ENCODE measurements at regions of chr4 and their contacts with region 1.

Region 1: GRCh38 chr4:184745831-184746795 is 12.2 kb upstream of the CENPU start:
- DNase-seq: peak; percentile 62
- ATAC-seq: peak; percentile 37
- H3K4me3 ChIP-seq: no peak overlapping the region; a peak in 1 of 6 replicates
- H3K27ac ChIP-seq: no peak overlapping the region
- H3K4me1 ChIP-seq: peaks cover 53% of the 10 kb centered on the region
- H3K27me3 ChIP-seq: no peaks in the 10 kb centered on the region
- CTCF ChIP-seq: peak; percentile 79
- EP300 ChIP-seq: no peak
- POLR2A ChIP-seq: no peak
- RAD21 ChIP-seq: peak; percentile 75

Region 2: GRCh38 chr4:184156163-184156920 is 589.8 kb before region 1 on chr4:
- CTCF ChIA-PET with region 1: no interaction called
- POLR2A ChIA-PET with region 1: no interaction called
- in situ Hi-C with region 1: no loop called
- intact Hi-C with region 1: no loop called
- DNase-seq: no peak
- ATAC-seq: no peak
- H3K4me3 ChIP-seq: no peak overlapping the region
- H3K27ac ChIP-seq: no peak overlapping the region
- H3K4me1 ChIP-seq: no peaks in the 10 kb centered on the region
- H3K27me3 ChIP-seq: no peaks in the 10 kb centered on the region
- CTCF ChIP-seq: no peak
- EP300 ChIP-seq: no peak
- POLR2A ChIP-seq: no peak
- RAD21 ChIP-seq: no peak

Region 3: DNA sequence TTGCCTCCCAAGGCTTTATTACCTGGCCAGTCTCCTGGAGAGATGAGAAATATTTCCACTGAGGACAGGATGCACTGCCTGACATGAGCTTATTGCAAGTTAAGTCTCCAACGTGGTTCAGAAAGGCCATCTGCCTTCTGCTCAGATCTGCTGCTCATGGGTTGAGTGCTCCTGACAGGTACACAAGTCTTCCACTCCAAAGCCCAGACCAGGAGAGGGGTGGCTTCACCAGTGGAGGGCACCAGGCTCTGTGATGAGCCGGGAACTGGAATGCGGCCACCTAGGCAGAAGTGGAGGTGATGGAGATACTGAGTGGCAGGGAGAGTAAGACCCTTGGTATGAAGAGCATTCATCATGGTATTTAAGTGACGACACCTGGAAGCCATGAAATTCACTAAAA is 192.2 kb before region 1 on chr4:
- CTCF ChIA-PET with region 1: no interaction called
- POLR2A ChIA-PET with region 1: no interaction called
- in situ Hi-C with region 1: no loop called
- intact Hi-C with region 1: loop called (anchors 10 kb)
- DNase-seq: peak; percentile 35
- ATAC-seq: peak; percentile 55
- H3K4me3 ChIP-seq: no peak overlapping the region
- H3K27ac ChIP-seq: no peak overlapping the region
- H3K4me1 ChIP-seq: peaks cover 22% of the 10 kb centered on the region
- H3K27me3 ChIP-seq: no peaks in the 10 kb centered on the region
- CTCF ChIP-seq: peak; percentile 63
- EP300 ChIP-seq: no peak
- POLR2A ChIP-seq: no peak
- RAD21 ChIP-seq: no peak

Region 4: DNA sequence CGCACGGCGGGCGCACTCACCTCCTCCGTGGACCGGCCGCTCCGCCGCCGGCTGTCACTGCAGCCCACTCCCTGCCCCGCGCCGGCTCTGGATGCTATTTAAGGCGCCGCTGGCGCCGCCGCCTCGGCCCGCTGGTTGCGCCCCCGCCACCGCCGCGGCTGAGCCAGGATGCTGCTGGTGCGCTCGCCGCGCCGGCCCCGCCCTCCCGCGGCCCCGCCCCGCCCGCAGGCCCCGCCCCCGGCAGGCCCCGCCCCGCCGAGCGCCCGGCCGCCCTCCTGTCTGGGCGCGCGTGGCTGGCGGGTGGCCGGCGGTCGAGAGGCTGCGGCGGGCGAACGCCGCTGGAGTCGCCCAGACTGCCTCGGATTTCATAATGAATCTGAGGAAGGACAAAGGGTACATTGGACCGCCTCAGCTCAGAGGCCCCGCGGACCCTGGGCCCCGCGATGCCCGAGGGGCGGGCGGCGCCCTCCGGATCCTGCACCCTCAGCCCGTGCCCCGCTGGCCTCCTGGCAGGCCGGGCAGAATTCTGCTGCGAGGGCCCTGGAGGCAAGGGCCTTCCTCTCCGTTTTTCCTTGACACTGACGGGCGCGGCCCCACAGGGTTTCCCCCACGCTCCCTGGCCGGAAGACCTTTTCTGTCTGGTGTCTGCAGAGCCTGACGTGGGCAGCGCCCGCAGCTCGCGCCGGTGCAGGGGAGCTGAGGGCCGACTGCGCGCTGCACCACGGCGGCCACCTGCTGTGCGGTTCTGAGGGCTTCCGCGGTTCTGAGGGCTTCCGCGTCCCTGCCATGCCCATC is 80.0 kb after region 1 on chr4 and contains the start of gene ACSL1:
- CTCF ChIA-PET with region 1: no interaction called
- POLR2A ChIA-PET with region 1: no interaction called
- in situ Hi-C with region 1: loop called (anchors 10 kb)
- intact Hi-C with region 1: no loop called
- DNase-seq: peak; percentile 39
- ATAC-seq: peak; percentile 85
- H3K4me3 ChIP-seq: peak within 1 kb of the TSS; percentile 58 to 81 (median 75)
- H3K27ac ChIP-seq: no peak within 1 kb of the TSS
- H3K4me1 ChIP-seq: peaks cover 40% of the 10 kb centered on the region
- H3K27me3 ChIP-seq: peaks cover 0 to 3% of the 10 kb centered on the region in 2 experiments; a peak in 1 of 5 replicates
- CTCF ChIP-seq: no peak
- EP300 ChIP-seq: no peak
- POLR2A ChIP-seq: peak in 1 of 2 experiments; percentile 54; a peak in 2 of 4 replicates
- RAD21 ChIP-seq: 0 out of 2 replicates have a peak, but pooled peaks have one; percentile 5
- total RNA-seq, gene ACSL1: 29.8 and 38.2 TPM in 2 replicates

Region 5: GRCh38 chr4:184983672-184984356 is 237.7 kb after region 1 on chr4:
- CTCF ChIA-PET with region 1: interaction called, 18 read pairs
- POLR2A ChIA-PET with region 1: no interaction called
- in situ Hi-C with region 1: loop called (anchors 5 kb)
- intact Hi-C with region 1: loop called (anchors 1 kb)
- DNase-seq: peak; percentile 42
- ATAC-seq: peak; percentile 91
- H3K4me3 ChIP-seq: no peak overlapping the region
- H3K27ac ChIP-seq: no peak overlapping the region
- H3K4me1 ChIP-seq: no peaks in the 10 kb centered on the region
- H3K27me3 ChIP-seq: peaks cover 4 to 15% of the 10 kb centered on the region in 2 experiments; a peak in 2 of 5 replicates
- CTCF ChIP-seq: peak; percentile 78
- EP300 ChIP-seq: no peak
- POLR2A ChIP-seq: no peak
- RAD21 ChIP-seq: peak; percentile 62

Region 6: GRCh38 chr4:185011408-185011807 is 265.3 kb after region 1 on chr4:
- CTCF ChIA-PET with region 1: interaction called, 7 read pairs
- POLR2A ChIA-PET with region 1: interaction called, 3 read pairs
- in situ Hi-C with region 1: no loop called
- intact Hi-C with region 1: loop called (anchors 2 kb)
- DNase-seq: peak; percentile 14
- ATAC-seq: peak; percentile 97
- H3K4me3 ChIP-seq: no peak overlapping the region
- H3K27ac ChIP-seq: no peak overlapping the region
- H3K4me1 ChIP-seq: 0 out of 2 replicates have a peak, but pooled peaks cover 4% of the 10 kb centered on the region
- H3K27me3 ChIP-seq: peaks cover 3 to 59% of the 10 kb centered on the region in 2 experiments; a peak in 3 of 5 replicates
- CTCF ChIP-seq: peak; percentile 73
- EP300 ChIP-seq: no peak
- POLR2A ChIP-seq: no peak
- RAD21 ChIP-seq: no peak; the same call in 1 of the 2 replicates

Region 7: DNA sequence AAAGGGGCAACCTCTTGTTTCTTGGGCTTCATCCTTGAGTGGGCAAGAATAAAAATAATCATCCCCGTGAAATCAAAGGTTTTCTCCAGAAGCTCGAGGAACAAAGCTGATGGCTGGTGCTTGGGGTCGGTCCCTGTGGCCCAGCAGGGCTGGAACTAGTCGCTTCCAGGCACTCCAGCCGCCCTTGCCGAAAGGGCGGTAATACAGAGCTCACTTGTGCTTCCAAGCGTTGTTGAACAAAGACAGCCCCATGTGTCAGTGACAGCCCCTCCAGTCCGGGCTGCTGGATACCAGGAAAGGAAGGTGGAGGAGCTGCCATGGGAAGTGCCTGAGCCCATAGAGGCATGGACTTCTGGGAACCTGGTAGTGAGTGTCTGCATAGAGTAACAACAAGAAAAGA is 277.4 kb after region 1 on chr4:
- CTCF ChIA-PET with region 1: no interaction called
- POLR2A ChIA-PET with region 1: no interaction called
- in situ Hi-C with region 1: no loop called
- intact Hi-C with region 1: no loop called
- DNase-seq: no peak
- ATAC-seq: no peak
- H3K4me3 ChIP-seq: no peak overlapping the region
- H3K27ac ChIP-seq: no peak overlapping the region
- H3K4me1 ChIP-seq: no peaks in the 10 kb centered on the region
- H3K27me3 ChIP-seq: peaks cover 10 to 65% of the 10 kb centered on the region in 2 experiments
- CTCF ChIP-seq: no peak
- EP300 ChIP-seq: no peak
- POLR2A ChIP-seq: no peak
- RAD21 ChIP-seq: no peak